ENCODE measurements at regions of chr1 and their contacts with region 1.

Region 1: DNA sequence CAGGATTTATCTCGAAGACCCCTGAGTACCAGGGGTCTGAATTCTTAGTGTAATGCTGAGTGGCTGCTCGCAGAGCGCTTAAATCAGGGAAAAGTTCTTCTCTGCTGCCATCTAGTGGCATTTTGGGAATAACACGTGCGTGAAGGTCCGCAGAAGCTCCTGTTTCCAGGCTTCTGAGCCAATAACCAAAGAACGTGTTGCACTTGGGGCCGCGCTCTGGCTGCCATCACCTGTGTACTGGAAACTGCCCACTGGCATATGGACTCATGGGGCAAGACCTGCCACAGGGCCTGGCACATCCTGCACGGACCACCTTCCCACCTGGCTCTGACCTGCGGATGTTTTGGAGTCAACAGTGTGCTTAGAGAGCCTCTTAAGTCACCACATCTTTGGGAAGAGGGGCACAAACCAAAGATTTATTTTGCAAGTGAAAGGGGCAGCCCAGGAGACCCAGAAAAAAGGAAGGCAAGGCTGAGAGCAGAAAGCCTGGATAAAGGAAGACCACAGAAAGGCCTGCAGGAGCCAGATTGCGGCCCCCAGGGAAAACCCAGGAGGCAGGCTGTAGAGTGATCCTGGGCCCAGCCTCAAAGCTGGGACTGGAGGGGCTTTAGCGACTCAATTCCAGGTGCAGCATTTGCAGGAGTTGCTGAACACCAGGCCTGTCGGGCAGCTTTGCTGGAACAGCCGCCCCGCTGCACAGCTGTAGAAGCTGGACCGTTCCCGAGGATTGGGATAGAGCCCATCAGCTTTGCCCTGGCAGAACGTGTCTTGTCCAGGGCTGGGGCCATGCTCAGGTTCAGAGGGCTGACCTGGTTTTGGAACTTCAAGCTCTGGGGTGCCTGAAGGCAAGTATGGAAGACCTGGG is 13.0 kb downstream of the CHIT1 start:
- DNase-seq: peak; percentile 56
- H3K4me3 Mint-ChIP-seq: no peak overlapping the region
- H3K27ac Mint-ChIP-seq: no peak overlapping the region
- H3K4me1 Mint-ChIP-seq: no peaks in the 10 kb centered on the region
- H3K27me3 Mint-ChIP-seq: peaks cover 8% of the 10 kb centered on the region

Region 2: GRCh38 chr1:203084588-203085502 is 131.7 kb before region 1 on chr1:
- CTCF ChIA-PET with region 1: interaction called, 21 read pairs
- POLR2A ChIA-PET with region 1: no interaction called
- intact Hi-C with region 1: no loop called
- DNase-seq: peak; percentile 56
- H3K4me3 Mint-ChIP-seq: no peak overlapping the region
- H3K27ac Mint-ChIP-seq: no peak overlapping the region
- H3K4me1 Mint-ChIP-seq: no peaks in the 10 kb centered on the region
- H3K27me3 Mint-ChIP-seq: peaks cover 13% of the 10 kb centered on the region

Region 3: DNA sequence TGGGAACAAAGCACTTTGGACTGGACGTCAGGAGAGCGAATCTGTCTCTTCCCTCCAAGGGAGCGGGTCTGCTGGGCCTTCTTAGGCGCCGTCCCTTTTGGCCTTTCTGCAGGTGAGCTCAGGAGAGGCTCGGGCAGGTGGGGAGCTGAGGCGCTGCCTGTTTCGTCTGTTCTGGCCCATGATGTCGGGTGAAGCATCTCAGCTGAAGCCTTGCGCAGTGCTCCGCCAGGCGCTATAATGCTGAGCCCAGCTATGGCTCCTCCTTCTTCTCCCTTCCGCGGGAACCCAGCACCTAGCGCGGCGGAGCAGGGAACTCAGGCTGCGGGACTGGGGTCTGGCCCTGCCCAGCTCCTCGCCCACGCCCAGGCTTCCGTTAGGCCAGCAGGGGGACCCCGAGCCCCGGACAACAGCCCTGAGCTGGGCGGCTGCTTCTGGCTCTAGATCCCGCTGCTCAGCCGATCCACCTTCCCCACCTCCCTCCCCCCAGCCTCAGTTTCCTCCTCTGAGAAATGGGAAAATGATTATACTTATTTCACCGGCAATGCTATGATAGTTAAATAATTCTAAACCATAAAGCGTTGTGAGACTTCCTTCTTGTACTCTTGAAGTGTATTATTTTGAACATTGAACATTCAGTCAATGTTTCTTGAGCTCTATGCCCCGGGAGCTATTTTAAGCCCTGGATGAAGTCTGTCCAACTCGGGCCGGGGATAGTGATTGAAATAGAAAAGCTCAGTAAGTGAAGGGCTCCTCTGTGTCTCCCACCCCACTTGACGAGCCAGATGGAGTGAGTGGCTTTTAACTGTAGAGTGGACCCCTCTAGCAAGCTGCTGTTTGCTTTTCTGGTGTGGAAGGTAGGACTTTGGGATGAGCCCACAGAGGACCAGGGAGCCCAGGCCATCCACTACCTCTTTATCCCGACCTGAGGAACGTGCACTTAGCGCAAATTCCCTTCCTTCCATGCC is 98.6 kb before region 1 on chr1:
- CTCF ChIA-PET with region 1: interaction called, 16 read pairs
- POLR2A ChIA-PET with region 1: interaction called, 4 read pairs
- intact Hi-C with region 1: loop called (anchors 2 kb)
- DNase-seq: peak; percentile 58
- H3K4me3 Mint-ChIP-seq: no peak overlapping the region
- H3K27ac Mint-ChIP-seq: no peak overlapping the region
- H3K4me1 Mint-ChIP-seq: peaks cover 4% of the 10 kb centered on the region
- H3K27me3 Mint-ChIP-seq: peaks cover 35% of the 10 kb centered on the region

Region 4: GRCh38 chr1:203172128-203173010 is 44.1 kb before region 1 on chr1:
- CTCF ChIA-PET with region 1: interaction called, 14 read pairs
- POLR2A ChIA-PET with region 1: no interaction called
- intact Hi-C with region 1: loop called (anchors 5 kb)
- DNase-seq: peak; percentile 58
- H3K4me3 Mint-ChIP-seq: no peak overlapping the region
- H3K27ac Mint-ChIP-seq: no peak overlapping the region
- H3K4me1 Mint-ChIP-seq: no peaks in the 10 kb centered on the region
- H3K27me3 Mint-ChIP-seq: no peaks in the 10 kb centered on the region

Region 5: GRCh38 chr1:203206129-203206687 is 10.3 kb before region 1 on chr1:
- CTCF ChIA-PET with region 1: interaction called, 14 read pairs
- POLR2A ChIA-PET with region 1: no interaction called
- intact Hi-C with region 1: no loop called
- DNase-seq: no peak
- H3K4me3 Mint-ChIP-seq: no peak overlapping the region
- H3K27ac Mint-ChIP-seq: no peak overlapping the region
- H3K4me1 Mint-ChIP-seq: no peaks in the 10 kb centered on the region
- H3K27me3 Mint-ChIP-seq: peaks cover 8% of the 10 kb centered on the region